ENCODE measurements at regions of chr6 and their contacts with region 1.

Region 1: GRCh38 chr6:21593412-21593926 is at the start of gene SOX4:
- DNase-seq: peak; percentile 95
- H3K4me3 ChIP-seq: peak within 1 kb of the TSS; percentile 51 to 97 (median 87)
- H3K27ac ChIP-seq: peak within 1 kb of the TSS; percentile 91 to 98 (median 96)
- H3K4me1 ChIP-seq: peaks cover 5 to 30% (median 13%) of the 10 kb centered on the region in 4 donors
- H3K27me3 ChIP-seq: no peaks in the 10 kb centered on the region
- CTCF ChIP-seq: no peak
- EP300 ChIP-seq: no peak
- POLR2A ChIP-seq: peak; percentile 94
- total RNA-seq, gene SOX4: 7.5 to 25.3 (median 12.9) TPM

Region 2: DNA sequence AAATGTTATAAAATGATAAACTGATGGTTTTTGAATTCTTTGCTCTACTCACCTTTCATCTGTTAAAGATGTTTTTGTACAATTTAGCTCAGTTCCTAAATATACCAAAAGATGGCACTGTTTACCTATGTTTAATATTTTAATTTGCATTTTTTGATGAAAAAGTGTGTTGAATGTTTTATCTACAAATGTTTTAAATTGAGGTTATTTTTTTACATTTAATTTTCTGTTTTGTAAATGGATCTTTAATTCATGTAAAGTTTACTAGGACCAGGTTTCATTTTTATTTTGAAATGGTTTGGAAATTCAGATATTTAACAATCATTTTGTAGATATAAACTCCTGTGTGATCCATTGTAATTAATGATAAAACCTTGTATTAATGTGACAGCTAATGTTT is 1029.2 kb before region 1 on chr6:
- in situ Hi-C with region 1: loop called (anchors 5 to 25 kb)
- intact Hi-C with region 1: loop called (anchors 10 kb)
- DNase-seq: no peak
- H3K4me3 ChIP-seq: no peak overlapping the region
- H3K27ac ChIP-seq: no peak overlapping the region
- H3K4me1 ChIP-seq: peaks cover 0 to 4% (median 0%) of the 10 kb centered on the region in 4 donors
- H3K27me3 ChIP-seq: no peaks in the 10 kb centered on the region
- CTCF ChIP-seq: peak; percentile 50 to 70 (median 68)
- EP300 ChIP-seq: no peak
- POLR2A ChIP-seq: no peak

Region 3: DNA sequence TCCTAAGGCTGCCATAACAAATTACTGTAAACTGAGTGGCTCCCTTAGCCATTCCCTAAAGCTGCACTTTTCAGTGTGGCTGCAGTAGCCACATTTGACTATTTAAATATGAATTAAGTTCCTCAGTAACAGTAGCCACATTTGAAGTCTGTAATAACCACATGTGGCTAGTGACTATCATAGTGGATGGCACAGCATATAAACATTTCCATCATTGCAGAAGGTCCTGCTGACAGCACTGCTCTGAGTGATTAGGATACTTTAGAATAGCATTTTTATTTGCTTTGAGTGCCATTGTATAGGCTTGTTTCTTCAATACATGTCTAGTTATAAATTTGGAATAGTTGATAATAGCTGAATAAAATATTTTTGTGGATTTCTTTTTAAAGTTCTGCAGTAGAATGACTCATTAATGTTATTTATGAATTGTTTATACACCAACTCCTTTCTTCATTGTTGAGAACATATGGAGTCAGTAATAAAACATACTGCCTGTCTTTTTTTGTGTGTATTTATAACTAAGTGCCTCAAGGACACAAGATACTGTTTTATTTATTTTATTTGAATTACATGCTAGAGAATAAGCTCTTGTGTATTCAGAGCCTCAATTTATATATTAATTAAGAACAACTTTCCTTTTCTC is 842.1 kb before region 1 on chr6:
- in situ Hi-C with region 1: no loop called
- intact Hi-C with region 1: no loop called
- DNase-seq: no peak
- H3K4me3 ChIP-seq: no peak overlapping the region
- H3K27ac ChIP-seq: no peak overlapping the region
- H3K4me1 ChIP-seq: peaks cover 0 to 11% (median 0%) of the 10 kb centered on the region in 4 donors
- H3K27me3 ChIP-seq: no peaks in the 10 kb centered on the region
- CTCF ChIP-seq: no peak
- EP300 ChIP-seq: no peak
- POLR2A ChIP-seq: no peak

Region 4: GRCh38 chr6:20789162-20789561 is 804.3 kb before region 1 on chr6:
- in situ Hi-C with region 1: no loop called
- intact Hi-C with region 1: loop called (anchors 10 kb)
- DNase-seq: no peak
- H3K4me3 ChIP-seq: no peak overlapping the region
- H3K27ac ChIP-seq: no peak overlapping the region
- H3K4me1 ChIP-seq: no peaks in the 10 kb centered on the region
- H3K27me3 ChIP-seq: no peaks in the 10 kb centered on the region
- CTCF ChIP-seq: no peak
- EP300 ChIP-seq: no peak
- POLR2A ChIP-seq: no peak

Region 5: GRCh38 chr6:21664314-21665109 is 71.0 kb after region 1 on chr6:
- in situ Hi-C with region 1: no loop called
- intact Hi-C with region 1: loop called (anchors 5 kb)
- DNase-seq: peak; percentile 20
- H3K4me3 ChIP-seq: peak overlapping the region; percentile 26 to 60 (median 33)
- H3K27ac ChIP-seq: peak overlapping the region; percentile 16 to 67 (median 43)
- H3K4me1 ChIP-seq: peaks cover 0 to 30% (median 22%) of the 10 kb centered on the region in 4 donors
- H3K27me3 ChIP-seq: peaks cover 66% of the 10 kb centered on the region
- CTCF ChIP-seq: no peak
- EP300 ChIP-seq: no peak
- POLR2A ChIP-seq: no peak

Region 6: GRCh38 chr6:21808045-21808470 is 214.6 kb after region 1 on chr6:
- in situ Hi-C with region 1: no loop called
- intact Hi-C with region 1: loop called (anchors 10 kb)
- DNase-seq: no peak
- H3K4me3 ChIP-seq: no peak overlapping the region
- H3K27ac ChIP-seq: peak overlapping the region; percentile 55 to 69 (median 64)
- H3K4me1 ChIP-seq: peaks cover 6 to 29% (median 13%) of the 10 kb centered on the region in 4 donors
- H3K27me3 ChIP-seq: no peaks in the 10 kb centered on the region
- CTCF ChIP-seq: no peak
- EP300 ChIP-seq: no peak
- POLR2A ChIP-seq: no peak

Measured in transverse colon (tissue), 4 donors.